B cell (primary cell): ENCODE measurements at regions of chr1 and their contacts with region 1.

Region 1: GRCh38 chr1:46065405-46065804 is 67.0 kb downstream of the PIK3R3 start:
- DNase-seq: peak; percentile 37
- ATAC-seq: no peak
- H3K4me3 ChIP-seq: peak overlapping the region in 1 of 5 experiments; percentile 31
- H3K4me3 Mint-ChIP-seq: peak overlapping the region; percentile 65
- H3K27ac ChIP-seq: peak overlapping the region in 1 of 2 donors; percentile 14
- H3K27ac Mint-ChIP-seq: peak overlapping the region; percentile 81
- H3K4me1 ChIP-seq: peaks cover 5 to 12% of the 10 kb centered on the region in 2 donors
- H3K4me1 Mint-ChIP-seq: peaks cover 17% of the 10 kb centered on the region
- H3K27me3 ChIP-seq: no peaks in the 10 kb centered on the region
- H3K27me3 Mint-ChIP-seq: no peaks in the 10 kb centered on the region
- CTCF ChIP-seq: no peak

Region 2: DNA sequence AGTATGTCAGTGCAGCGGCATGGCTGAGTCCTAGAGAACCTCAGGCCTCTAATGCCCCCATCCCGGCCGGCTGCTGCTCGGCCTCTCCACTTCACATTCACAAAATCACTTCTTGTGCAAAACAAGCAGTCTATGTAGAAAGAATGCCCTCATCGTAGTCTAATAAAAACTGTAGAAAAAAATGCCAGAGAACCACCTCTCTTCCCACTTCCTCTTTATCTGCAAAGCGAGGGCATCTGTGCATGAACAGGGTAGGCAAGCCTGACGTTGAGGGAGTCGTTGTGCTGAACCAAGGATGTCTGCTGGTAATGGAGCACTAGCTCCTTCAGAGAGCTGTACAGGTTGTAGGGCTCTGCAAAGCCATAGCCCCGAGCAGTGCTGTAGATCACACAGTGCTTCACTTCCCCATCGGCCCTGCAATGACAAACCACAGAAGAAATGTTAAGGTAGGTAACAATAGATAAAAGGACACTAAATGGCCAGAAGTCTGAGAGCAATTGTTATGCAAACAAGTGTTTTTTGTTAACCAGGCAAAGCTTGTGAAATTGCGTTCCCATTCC is 21.9 kb before region 1 on chr1:
- CTCF ChIA-PET with region 1: no interaction called
- POLR2A ChIA-PET with region 1: interaction called, 3 read pairs
- intact Hi-C with region 1: loop called (anchors 2 kb)
- DNase-seq: peak; percentile 90
- ATAC-seq: peak; percentile 100
- H3K4me3 ChIP-seq: peak overlapping the region in 2 of 5 experiments; percentile 6 to 37
- H3K4me3 Mint-ChIP-seq: peak overlapping the region; percentile 65
- H3K27ac ChIP-seq: peak overlapping the region; percentile 36 to 38
- H3K27ac Mint-ChIP-seq: peak overlapping the region; percentile 71
- H3K4me1 ChIP-seq: peaks cover 36 to 37% of the 10 kb centered on the region in 2 donors
- H3K4me1 Mint-ChIP-seq: peaks cover 36% of the 10 kb centered on the region
- H3K27me3 ChIP-seq: no peaks in the 10 kb centered on the region
- H3K27me3 Mint-ChIP-seq: no peaks in the 10 kb centered on the region
- CTCF ChIP-seq: no peak

Region 3: GRCh38 chr1:46394108-46394871 is 328.9 kb after region 1 on chr1 and contains the start of gene FAAH:
- CTCF ChIA-PET with region 1: no interaction called
- POLR2A ChIA-PET with region 1: no interaction called
- intact Hi-C with region 1: no loop called
- DNase-seq: peak; percentile 58
- ATAC-seq: peak; percentile 28
- H3K4me3 ChIP-seq: peak within 1 kb of the TSS in 3 of 5 experiments; percentile 36 to 50 (median 44)
- H3K4me3 Mint-ChIP-seq: peak within 1 kb of the TSS; percentile 72
- H3K27ac ChIP-seq: no peak within 1 kb of the TSS
- H3K27ac Mint-ChIP-seq: no peak within 1 kb of the TSS
- H3K4me1 ChIP-seq: peaks cover 5 to 9% of the 10 kb centered on the region in 2 donors
- H3K4me1 Mint-ChIP-seq: peaks cover 8% of the 10 kb centered on the region
- H3K27me3 ChIP-seq: peaks cover 0 to 21% (median 5%) of the 10 kb centered on the region in 4 experiments
- H3K27me3 Mint-ChIP-seq: peaks cover 33% of the 10 kb centered on the region
- CTCF ChIP-seq: no peak
- total RNA-seq, gene FAAH: 5.6 and 10.0 TPM in 2 replicates